Activated B cell treated with CpG ODN at 0.5 μM for 24 hours (primary cell): ENCODE measurements at regions of chr16 and their contacts with region 1.

Region 1: DNA sequence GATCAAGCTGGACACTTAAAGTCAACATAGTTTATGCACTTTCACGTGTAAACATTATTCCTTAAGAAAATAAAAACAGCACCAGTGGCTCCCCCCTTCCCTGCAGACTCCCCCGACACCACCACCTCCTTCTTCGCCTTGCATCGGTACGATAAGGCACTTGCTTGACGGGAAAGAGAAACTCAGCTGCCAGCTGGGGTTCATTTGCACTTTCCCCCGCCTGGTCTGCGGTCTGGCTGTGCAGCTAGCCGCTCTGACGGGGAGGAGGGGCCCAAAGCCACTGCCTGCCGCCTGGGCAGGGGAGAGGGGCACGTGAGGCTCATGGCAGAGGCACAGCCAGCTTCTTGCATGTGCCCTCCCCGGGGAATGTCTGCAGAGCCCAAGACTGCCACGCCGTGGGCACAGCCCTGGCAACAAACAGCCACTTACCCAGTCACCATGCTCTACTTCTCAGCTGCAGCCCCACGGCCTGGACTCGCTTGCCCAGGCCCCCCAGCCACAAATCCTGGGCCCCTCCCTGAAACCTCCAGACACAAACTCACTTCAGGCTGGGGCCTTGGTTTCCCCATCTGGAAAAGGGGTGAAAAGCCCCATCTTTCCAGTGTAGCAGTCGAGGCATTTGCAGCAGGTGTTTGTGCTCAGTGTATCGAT is 16.5 kb upstream of the PRM1 start:
- DNase-seq: peak; percentile 85
- ATAC-seq: peak; percentile 97
- H3K4me3 Mint-ChIP-seq: peak overlapping the region; percentile 73
- H3K27ac Mint-ChIP-seq: peak overlapping the region; percentile 85
- H3K4me1 Mint-ChIP-seq: peaks cover 72% of the 10 kb centered on the region
- H3K27me3 Mint-ChIP-seq: no peaks in the 10 kb centered on the region
- CTCF ChIP-seq: no peak

Region 2: DNA sequence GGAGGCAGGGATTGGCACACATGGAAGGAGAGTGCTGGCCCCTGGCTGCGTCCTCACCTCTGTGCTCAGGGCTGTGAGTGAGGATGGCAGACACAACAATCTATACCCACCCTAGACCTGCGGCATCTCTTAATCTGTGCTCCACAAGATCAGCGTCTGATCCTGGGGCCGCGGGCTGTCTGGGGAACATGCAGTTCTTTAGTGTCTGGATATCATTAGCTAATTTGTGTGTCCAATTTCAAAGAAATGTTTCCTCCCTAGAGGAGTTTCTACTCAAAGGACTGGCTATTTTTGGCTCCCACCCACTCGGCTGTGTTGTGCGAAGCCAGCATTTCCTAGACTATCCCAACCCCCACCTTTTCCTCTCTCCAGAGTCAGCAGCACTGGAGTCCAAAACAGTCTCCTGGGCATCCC is 1209.2 kb before region 1 on chr16:
- CTCF ChIA-PET with region 1: no interaction called
- POLR2A ChIA-PET with region 1: no interaction called
- intact Hi-C with region 1: no loop called
- DNase-seq: no peak
- ATAC-seq: no peak
- H3K4me3 Mint-ChIP-seq: no peak overlapping the region
- H3K27ac Mint-ChIP-seq: no peak overlapping the region
- H3K4me1 Mint-ChIP-seq: no peaks in the 10 kb centered on the region
- H3K27me3 Mint-ChIP-seq: peaks cover 25% of the 10 kb centered on the region
- CTCF ChIP-seq: no peak

Region 3: GRCh38 chr16:11263737-11264136 is 33.9 kb before region 1 on chr16:
- CTCF ChIA-PET with region 1: interaction called, 94 read pairs
- POLR2A ChIA-PET with region 1: interaction called, 197 read pairs
- intact Hi-C with region 1: no loop called
- DNase-seq: no peak
- ATAC-seq: peak; percentile 59
- H3K4me3 Mint-ChIP-seq: no peak overlapping the region
- H3K27ac Mint-ChIP-seq: peak overlapping the region; percentile 4
- H3K4me1 Mint-ChIP-seq: peaks cover 22% of the 10 kb centered on the region
- H3K27me3 Mint-ChIP-seq: no peaks in the 10 kb centered on the region
- CTCF ChIP-seq: no peak

Region 4: GRCh38 chr16:11312718-11313492 is 15.3 kb after region 1 on chr16:
- CTCF ChIA-PET with region 1: interaction called, 32 read pairs
- POLR2A ChIA-PET with region 1: interaction called, 137 read pairs
- intact Hi-C with region 1: loop called (anchors 1 kb)
- DNase-seq: no peak
- ATAC-seq: no peak
- H3K4me3 Mint-ChIP-seq: no peak overlapping the region
- H3K27ac Mint-ChIP-seq: peak overlapping the region; percentile 47
- H3K4me1 Mint-ChIP-seq: peaks cover 74% of the 10 kb centered on the region
- H3K27me3 Mint-ChIP-seq: no peaks in the 10 kb centered on the region
- CTCF ChIP-seq: no peak

Region 5: DNA sequence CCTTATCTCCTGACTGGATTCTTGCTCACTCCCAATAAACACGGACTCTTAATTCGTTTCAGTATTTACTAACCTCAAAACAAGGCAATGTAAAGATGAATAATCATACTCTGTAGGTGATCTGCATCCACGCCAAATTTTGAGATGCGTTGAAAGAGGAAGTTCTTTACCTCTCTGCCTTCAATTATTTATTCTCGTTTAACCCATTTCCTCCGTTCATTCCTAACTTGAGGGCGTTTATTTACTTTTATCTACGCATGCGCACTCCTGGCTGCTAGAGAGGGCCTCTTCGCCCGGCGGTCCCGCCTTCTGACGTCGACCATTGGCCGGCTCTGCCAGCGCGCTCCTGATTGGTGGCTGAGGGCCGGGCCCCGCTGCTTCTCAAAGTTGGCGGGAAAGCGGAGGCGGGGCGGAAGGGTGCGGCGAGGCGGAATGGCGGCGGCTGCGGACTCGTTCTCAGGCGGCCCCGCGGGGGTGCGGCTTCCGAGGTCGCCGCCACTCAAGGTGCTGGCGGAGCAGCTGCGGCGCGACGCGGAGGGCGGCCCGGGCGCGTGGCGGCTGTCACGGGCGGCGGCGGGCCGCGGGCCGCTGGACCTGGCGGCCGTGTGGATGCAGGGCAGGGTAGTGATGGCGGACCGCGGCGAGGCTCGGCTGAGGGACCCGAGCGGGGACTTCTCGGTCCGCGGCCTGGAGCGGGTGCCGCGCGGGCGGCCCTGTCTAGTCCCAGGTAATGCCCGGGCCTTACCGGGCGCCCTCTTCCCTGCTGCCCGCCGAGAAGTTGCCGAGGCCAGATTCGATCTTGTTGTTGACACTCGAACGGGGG is 47.6 kb after region 1 on chr16 and contains the start of gene RMI2:
- CTCF ChIA-PET with region 1: no interaction called
- POLR2A ChIA-PET with region 1: interaction called, 9 read pairs
- intact Hi-C with region 1: loop called (anchors 1 kb)
- DNase-seq: peak; percentile 92
- ATAC-seq: peak; percentile 100
- H3K4me3 Mint-ChIP-seq: peak within 1 kb of the TSS; percentile 86
- H3K27ac Mint-ChIP-seq: peak within 1 kb of the TSS; percentile 80
- H3K4me1 Mint-ChIP-seq: peaks cover 37% of the 10 kb centered on the region
- H3K27me3 Mint-ChIP-seq: no peaks in the 10 kb centered on the region
- CTCF ChIP-seq: no peak
- total RNA-seq, gene RMI2: 8.1 TPM in 2 replicates

Region 6: DNA sequence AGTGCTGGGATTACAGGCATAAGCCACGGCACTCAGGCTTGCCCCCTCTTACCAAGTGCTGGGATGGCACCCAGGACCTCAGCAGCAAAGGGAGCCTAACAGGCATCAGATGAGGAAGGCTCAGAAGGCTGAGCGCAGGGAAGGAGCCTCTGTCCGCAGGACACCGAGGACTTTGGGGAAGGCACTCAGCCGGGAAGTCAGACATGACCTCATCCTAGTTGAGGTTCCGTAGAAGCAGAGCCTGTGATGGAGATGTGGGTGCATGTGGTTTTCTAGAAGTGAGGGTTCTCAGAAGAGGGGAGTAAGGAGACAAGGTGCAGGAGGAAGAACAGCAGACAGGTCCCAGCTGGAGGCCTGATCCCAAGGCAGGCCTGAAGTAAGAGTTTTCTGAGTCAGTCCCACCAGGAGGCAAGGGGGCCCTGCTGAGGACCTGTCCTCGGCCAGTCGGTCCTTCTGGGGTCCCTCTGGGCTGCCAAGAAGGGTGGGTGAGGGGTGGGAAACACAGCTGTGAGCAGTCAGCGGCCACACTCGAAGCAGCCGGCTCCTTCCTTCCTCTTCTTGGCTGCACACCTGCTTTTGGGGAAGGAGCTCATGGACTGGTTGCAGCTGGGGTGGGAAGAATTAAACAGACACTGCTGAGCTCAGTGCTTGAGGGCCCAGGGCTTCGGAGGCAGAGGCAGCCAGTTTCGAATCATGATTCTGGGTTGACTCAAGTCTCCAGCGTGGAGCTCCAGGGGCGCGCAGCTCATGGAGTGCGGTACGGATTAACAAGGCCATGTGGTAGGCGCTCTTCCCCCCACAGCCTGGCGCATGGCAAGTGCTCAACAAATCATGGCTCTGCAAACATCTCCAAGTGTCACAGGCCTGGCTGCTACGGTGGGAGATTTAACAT is 331.7 kb after region 1 on chr16:
- CTCF ChIA-PET with region 1: no interaction called
- POLR2A ChIA-PET with region 1: interaction called, 12 read pairs
- intact Hi-C with region 1: no loop called
- DNase-seq: no peak
- ATAC-seq: peak; percentile 70
- H3K4me3 Mint-ChIP-seq: peak overlapping the region; percentile 50
- H3K27ac Mint-ChIP-seq: peak overlapping the region; percentile 59
- H3K4me1 Mint-ChIP-seq: peaks cover 48% of the 10 kb centered on the region
- H3K27me3 Mint-ChIP-seq: no peaks in the 10 kb centered on the region
- CTCF ChIP-seq: no peak